ENCODE measurements at regions of chr6 and their contacts with region 1.

Region 1: DNA sequence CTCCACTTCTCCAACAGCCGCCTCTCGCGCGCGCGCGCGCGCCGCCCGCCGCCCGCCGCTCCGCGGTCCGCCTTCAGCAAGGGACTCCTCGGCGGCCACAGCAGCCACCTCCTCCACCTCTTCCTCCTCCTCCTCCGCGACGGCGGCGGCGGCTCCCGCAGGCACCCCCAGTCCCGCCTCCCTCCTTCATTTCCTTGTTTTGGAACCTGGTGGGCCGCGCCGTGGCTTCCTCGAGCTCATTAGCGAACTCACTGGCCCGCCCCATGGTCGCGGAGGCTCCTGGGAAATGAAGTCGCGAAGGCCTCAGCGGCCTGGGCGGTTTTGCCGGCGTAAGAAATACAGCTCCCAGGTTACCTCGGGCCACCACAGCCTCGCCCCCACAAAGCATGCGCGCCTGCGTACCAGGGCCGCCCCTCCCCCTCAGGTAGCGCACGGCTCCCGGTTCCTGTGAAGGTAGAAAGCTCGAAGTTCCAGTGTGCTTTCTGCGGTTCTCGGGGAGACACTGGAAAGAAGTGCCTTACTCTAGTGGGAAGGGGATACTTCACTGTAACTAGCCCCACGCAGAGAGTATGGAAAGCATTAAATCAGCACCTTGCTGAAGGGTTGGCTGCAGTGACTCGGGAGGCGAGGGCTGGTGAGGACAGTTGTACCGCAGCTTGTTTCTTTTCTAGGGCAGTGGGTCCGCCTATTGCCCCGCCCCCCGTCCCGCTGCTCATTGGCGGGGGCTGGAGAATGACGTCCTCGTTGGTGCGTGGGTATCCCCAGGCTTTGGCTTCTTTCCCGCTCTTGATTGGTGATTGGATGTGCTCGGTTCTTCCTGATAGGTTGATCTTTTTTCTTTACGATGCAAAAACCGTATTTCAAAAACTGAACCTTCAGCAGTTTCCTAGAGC is at the start of gene CDK19:
- DNase-seq: peak; percentile 98
- H3K4me3 Mint-ChIP-seq: peak within 1 kb of the TSS; percentile 100
- H3K27ac Mint-ChIP-seq: peak within 1 kb of the TSS; percentile 100
- H3K4me1 Mint-ChIP-seq: peaks cover 46% of the 10 kb centered on the region
- H3K27me3 Mint-ChIP-seq: no peaks in the 10 kb centered on the region
- total RNA-seq, gene CDK19: 19.0 and 22.6 TPM in 2 replicates

Region 2: GRCh38 chr6:110179401-110180227 is 635.8 kb before region 1 on chr6 and contains the start of gene WASF1:
- intact Hi-C with region 1: loop called (anchors 1 kb)
- DNase-seq: peak; percentile 85
- H3K4me3 Mint-ChIP-seq: peak within 1 kb of the TSS; percentile 78
- H3K27ac Mint-ChIP-seq: peak within 1 kb of the TSS; percentile 3
- H3K4me1 Mint-ChIP-seq: peaks cover 8% of the 10 kb centered on the region
- H3K27me3 Mint-ChIP-seq: peaks cover 19% of the 10 kb centered on the region
- total RNA-seq, gene WASF1: 2.3 TPM in 2 replicates

Region 3: GRCh38 chr6:110537208-110538123 is 278.0 kb before region 1 on chr6:
- intact Hi-C with region 1: loop called (anchors 2 kb)
- DNase-seq: no peak
- H3K4me3 Mint-ChIP-seq: no peak overlapping the region
- H3K27ac Mint-ChIP-seq: peak overlapping the region; percentile 80
- H3K4me1 Mint-ChIP-seq: peaks cover 64% of the 10 kb centered on the region
- H3K27me3 Mint-ChIP-seq: no peaks in the 10 kb centered on the region

Region 4: GRCh38 chr6:110682460-110682853 is 133.0 kb before region 1 on chr6:
- intact Hi-C with region 1: loop called (anchors 2 kb)
- DNase-seq: peak; percentile 40
- H3K4me3 Mint-ChIP-seq: no peak overlapping the region
- H3K27ac Mint-ChIP-seq: peak overlapping the region; percentile 62
- H3K4me1 Mint-ChIP-seq: peaks cover 30% of the 10 kb centered on the region
- H3K27me3 Mint-ChIP-seq: no peaks in the 10 kb centered on the region

Region 5: DNA sequence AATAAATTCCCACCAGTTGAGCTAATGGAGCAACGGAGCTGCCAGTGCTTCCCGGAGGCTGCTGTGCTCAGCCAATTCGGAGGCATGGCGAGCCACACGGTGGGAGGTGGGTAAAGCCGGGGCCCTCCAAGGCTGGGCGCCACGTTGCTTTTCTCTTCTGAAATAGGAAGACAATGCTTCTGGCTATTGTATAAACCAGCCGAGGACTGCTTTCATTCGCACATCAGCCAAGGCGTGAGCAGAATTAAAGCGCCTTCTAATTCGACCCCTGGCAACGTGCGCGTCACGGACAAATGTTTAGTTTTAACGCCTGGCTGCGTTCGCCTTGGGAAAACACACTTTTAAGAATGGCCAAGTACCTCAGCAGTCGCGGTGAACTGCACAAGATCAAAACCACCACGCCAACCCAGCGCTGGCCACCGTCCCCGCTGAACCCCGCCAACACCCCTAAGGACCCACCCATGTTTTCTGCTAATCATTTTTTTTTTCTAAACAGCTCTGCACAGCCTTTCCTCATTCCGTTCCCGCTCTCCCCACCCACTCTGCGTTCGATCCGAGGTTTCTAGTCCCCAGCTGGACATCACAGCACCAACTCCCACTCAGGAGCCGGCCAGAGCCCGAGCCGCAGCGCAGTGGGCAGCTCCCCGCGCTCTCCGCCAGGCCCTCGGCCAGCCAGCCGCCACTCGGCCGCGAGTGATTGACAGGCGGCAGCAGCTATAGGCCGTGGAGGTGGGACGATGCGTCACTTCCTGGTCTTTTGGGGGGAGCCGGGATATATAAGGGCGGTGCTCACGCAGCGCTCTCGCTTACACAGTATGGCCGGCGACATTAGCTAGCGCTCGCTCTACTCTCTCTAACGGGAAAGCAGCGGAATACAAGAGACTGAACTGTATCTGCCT is 58.8 kb after region 1 on chr6 and contains the start of gene AMD1:
- intact Hi-C with region 1: loop called (anchors 1 kb)
- DNase-seq: peak; percentile 94
- H3K4me3 Mint-ChIP-seq: peak within 1 kb of the TSS; percentile 95
- H3K27ac Mint-ChIP-seq: peak within 1 kb of the TSS; percentile 98
- H3K4me1 Mint-ChIP-seq: peaks cover 26% of the 10 kb centered on the region
- H3K27me3 Mint-ChIP-seq: no peaks in the 10 kb centered on the region
- total RNA-seq, gene AMD1: 111 TPM in 2 replicates

Region 6: DNA sequence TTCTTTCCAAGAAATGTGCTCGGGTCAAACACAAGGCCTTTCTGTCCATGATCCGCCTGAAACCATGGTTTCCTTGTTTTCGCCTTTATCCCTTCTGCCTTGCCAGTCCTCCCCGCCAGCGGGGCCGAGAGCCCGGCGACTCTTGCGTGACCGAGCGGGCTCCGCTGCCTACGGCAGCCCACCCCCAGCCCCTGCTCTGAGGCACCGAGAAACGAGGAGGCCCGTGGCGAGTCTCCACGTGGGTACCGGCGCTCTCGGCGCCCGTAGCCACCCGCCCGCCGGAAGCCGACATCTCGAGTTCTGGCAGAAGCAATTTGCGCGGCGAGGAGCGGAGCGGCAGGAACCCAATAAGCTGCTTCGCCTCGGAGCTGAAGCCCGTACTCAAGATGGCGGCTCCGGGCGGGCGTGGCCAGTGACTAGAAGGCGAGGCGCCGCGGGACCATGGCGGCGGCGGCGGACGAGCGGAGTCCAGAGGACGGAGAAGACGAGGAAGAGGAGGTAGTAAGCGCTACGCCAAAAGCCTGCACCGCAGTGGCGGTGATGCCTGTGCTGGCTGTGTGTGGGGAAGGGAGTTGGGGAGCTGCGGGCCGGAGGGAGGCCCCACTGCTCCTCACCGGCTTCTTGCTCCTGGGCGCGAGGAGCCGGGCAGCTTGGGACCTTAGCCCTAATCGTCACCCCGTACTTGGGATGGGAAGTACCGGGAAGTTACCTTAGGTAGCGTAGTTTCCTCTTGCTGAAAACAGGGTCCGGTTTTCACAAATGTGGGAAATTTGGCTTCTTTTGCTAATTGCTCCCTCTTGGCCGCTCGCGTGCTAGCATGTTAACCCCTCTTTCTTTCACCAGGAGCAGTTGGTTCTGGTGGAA is 143.1 kb after region 1 on chr6 and contains the start of gene GTF3C6:
- intact Hi-C with region 1: loop called (anchors 1 kb)
- DNase-seq: peak; percentile 93
- H3K4me3 Mint-ChIP-seq: peak within 1 kb of the TSS; percentile 99
- H3K27ac Mint-ChIP-seq: peak within 1 kb of the TSS; percentile 99
- H3K4me1 Mint-ChIP-seq: peaks cover 13% of the 10 kb centered on the region
- H3K27me3 Mint-ChIP-seq: no peaks in the 10 kb centered on the region
- total RNA-seq, gene GTF3C6: 141 and 146 TPM in 2 replicates

Region 7: DNA sequence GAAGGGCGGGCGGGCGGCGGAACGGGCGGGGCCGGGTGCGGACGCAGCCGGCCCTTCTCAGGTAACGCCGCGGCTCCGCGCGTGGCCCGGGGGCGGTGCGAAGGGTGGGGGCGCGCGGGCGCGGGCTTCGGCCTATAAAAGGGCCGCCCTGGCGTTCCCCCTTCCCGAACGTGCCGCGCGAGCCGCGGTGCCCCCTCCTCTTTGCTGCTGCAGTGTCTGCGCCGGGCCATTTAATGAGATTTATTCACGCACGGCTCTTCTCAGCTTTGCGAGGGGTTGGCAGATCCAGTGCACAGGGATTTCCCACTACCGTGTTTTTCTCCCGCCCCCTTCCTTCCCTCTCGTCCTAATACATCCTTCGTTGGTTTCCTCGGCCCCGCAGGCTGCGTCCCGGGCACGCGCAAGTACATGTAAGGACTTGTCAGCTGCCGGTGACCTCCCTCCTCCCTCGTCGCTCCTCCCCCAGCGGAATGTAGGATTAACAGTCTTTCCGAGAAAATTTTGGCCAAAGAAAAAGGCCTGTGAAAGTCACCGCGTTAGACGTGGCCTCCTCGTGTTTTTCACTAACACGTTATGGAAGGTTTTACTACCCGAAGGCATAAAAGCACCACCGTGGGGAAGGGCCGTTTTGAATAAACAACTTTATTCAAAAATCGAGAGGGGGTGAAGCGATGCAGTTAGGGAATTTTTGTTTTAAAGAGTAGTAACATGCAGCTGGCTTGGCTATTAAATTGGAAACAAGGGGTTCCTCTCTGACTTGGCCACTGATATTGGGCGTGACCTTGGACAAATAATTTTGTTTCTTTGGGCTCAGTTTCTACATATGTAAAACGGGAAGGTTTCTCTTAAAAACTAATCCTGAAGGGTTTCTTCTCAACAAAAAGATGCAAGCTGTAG is 668.5 kb after region 1 on chr6:
- intact Hi-C with region 1: loop called (anchors 5 kb)
- DNase-seq: no peak
- H3K4me3 Mint-ChIP-seq: peak overlapping the region; percentile 91
- H3K27ac Mint-ChIP-seq: peak overlapping the region; percentile 96
- H3K4me1 Mint-ChIP-seq: peaks cover 50% of the 10 kb centered on the region
- H3K27me3 Mint-ChIP-seq: no peaks in the 10 kb centered on the region

Measured in activated T-helper 2 cell treated with anti-CD3 and anti-CD28 coated beads, Interferon-gamma antibody, Interleukin-2, Interleukin-4, amounts not matched to agents 10 μg/mL and 5 μg/mL and 100 μg/mL, durations not matched to agents 14 hours and 24 hours and 36 hours (primary cell).